HepG2 (cell line): ENCODE measurements at regions of chr12 and their contacts with region 1.

Region 1: DNA sequence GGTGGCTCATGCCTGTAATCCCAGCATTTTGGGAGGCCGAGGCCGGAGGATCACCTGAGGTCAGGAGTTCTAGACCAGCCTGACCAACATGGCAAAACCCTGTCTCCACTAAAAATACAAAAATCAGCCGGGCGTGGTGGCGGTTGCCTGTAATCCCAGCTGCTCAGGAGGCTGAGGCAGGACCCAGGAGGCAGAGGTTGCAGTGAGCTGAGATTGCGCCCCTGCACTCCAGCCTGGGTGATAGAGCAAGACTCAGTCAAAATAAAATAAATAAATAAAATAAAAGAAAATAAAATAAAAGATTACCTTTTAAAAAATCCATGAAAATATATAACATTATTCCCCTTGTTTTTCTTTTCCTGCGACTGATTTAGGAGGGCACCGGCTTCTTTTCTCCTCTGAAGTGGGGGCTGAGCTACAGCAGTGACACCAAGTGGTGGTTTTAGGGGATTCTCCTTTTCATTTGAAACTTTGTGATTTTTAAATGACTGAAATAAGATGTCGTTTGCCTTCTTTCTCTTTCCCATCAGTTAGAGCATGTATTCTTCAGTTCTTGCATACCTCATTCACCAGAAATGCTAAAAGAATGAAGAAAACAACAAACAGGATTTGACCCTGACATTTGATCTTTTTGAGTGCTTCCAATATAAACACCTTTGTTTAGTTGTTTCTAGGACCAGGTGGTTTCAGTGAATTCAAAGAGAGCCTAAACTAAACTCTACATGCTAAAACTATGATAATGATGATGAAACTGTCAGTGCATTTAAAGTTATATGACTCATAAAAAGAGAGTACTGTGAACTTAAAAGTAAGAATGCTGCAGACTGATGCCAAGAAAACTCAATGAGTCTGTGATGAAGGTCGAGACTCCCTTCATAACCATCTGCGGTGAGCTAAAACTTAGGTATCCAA is 22.6 kb upstream of the PKP2 start:
- DNase-seq: peak; percentile 37
- ATAC-seq: peak; percentile 69
- H3K4me3 ChIP-seq: no peak overlapping the region
- H3K27ac ChIP-seq: no peak overlapping the region
- H3K4me1 ChIP-seq: peaks cover 8% of the 10 kb centered on the region; the same call in 1 of the 2 replicates
- H3K27me3 ChIP-seq: no peaks in the 10 kb centered on the region
- CTCF ChIP-seq: peak; percentile 68
- EP300 ChIP-seq: no peak
- POLR2A ChIP-seq: no peak
- RAD21 ChIP-seq: peak; percentile 56; the same call in 1 of the 2 replicates

Region 2: DNA sequence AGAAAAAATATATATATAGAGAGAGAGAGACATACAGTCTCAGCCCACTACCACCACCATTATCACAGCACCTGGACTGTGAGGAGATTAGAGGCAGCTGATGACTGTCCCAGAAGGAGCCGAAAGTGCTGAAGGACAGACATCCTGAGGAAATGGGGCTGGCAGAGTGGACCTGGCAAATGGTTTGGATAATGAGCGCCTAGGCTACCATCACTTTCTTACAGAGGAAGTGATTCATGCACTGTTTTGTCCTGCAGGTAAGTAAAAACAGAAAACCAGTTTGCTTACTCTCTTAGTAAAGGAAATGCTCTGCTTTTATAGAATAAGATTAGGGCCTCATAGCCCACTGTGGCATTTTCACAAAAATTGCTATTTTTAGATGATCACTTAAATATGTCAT is 268.6 kb before region 1 on chr12:
- CTCF ChIA-PET with region 1: no interaction called
- POLR2A ChIA-PET with region 1: no interaction called
- in situ Hi-C with region 1: no loop called
- intact Hi-C with region 1: no loop called
- DNase-seq: no peak
- ATAC-seq: no peak
- H3K4me3 ChIP-seq: no peak overlapping the region
- H3K27ac ChIP-seq: no peak overlapping the region
- H3K4me1 ChIP-seq: peaks cover 29% of the 10 kb centered on the region
- H3K27me3 ChIP-seq: no peaks in the 10 kb centered on the region
- CTCF ChIP-seq: no peak
- EP300 ChIP-seq: no peak
- POLR2A ChIP-seq: no peak
- RAD21 ChIP-seq: no peak

Region 3: GRCh38 chr12:32854097-32854496 is 65.0 kb before region 1 on chr12:
- CTCF ChIA-PET with region 1: no interaction called
- POLR2A ChIA-PET with region 1: no interaction called
- in situ Hi-C with region 1: no loop called
- intact Hi-C with region 1: loop called (anchors 5 kb)
- DNase-seq: no peak
- ATAC-seq: no peak
- H3K4me3 ChIP-seq: no peak overlapping the region
- H3K27ac ChIP-seq: no peak overlapping the region
- H3K4me1 ChIP-seq: no peaks in the 10 kb centered on the region
- H3K27me3 ChIP-seq: no peaks in the 10 kb centered on the region
- CTCF ChIP-seq: no peak
- EP300 ChIP-seq: no peak
- POLR2A ChIP-seq: no peak
- RAD21 ChIP-seq: no peak

Region 4: DNA sequence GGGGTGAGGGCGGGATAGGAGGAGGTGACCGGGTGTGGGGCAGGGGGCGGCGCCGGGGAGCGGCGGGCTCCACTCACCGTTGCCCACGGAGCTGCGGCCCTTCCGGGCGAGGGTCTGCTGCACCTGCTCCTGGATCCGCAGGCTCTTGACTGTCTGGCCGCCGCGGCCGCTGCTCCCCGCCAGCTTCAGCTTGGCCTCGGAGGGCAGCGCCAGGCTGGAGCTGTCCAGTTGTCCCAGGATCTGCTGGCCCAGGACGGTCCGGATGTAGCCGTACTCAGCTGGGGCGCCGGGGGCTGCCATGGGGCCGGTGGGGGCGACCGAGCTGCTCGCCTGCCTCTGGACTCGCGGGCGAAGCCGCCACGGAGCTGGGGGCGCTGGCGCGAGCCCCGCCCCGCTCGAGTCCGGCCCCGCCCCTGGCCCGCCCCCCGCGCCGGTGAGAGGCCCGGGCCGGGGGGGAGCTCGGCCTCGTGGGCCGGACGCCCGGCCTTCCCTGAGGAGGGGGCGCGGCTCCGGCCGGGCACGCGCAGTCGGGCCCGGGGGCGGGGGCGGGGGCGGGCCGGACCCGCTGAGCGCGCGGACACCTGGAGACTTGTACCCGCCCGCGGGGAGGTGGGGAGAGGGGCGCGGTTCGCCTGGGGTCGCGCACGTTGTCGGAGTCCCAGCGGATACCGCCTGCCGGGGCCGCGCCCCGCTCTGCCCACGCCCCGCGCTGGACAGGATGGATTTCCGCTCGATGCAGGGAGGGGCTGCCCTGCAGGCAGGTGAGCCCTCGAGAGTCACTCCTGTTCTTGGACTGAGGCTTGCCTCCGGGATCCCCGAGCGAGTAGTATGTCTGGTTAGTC is 22.5 kb before region 1 on chr12 and contains the start of gene PKP2:
- CTCF ChIA-PET with region 1: no interaction called
- POLR2A ChIA-PET with region 1: interaction called, 3 read pairs
- in situ Hi-C with region 1: no loop called
- intact Hi-C with region 1: loop called (anchors 2 kb)
- DNase-seq: peak; percentile 80
- ATAC-seq: peak; percentile 82
- H3K4me3 ChIP-seq: peak within 1 kb of the TSS; percentile 78 to 98 (median 93)
- H3K27ac ChIP-seq: peak within 1 kb of the TSS; percentile 80
- H3K4me1 ChIP-seq: peaks cover 65% of the 10 kb centered on the region
- H3K27me3 ChIP-seq: no peaks in the 10 kb centered on the region
- CTCF ChIP-seq: no peak; the same call in 1 of the 2 replicates
- EP300 ChIP-seq: no peak
- POLR2A ChIP-seq: peak; percentile 53 to 71
- RAD21 ChIP-seq: peak; percentile 15; the same call in 1 of the 2 replicates
- total RNA-seq, gene PKP2: 25.3 and 27.5 TPM in 2 replicates

Region 5: GRCh38 chr12:32964981-32965585 is 45.9 kb after region 1 on chr12:
- CTCF ChIA-PET with region 1: no interaction called
- POLR2A ChIA-PET with region 1: no interaction called
- in situ Hi-C with region 1: no loop called
- intact Hi-C with region 1: no loop called
- DNase-seq: no peak
- ATAC-seq: no peak
- H3K4me3 ChIP-seq: no peak overlapping the region
- H3K27ac ChIP-seq: no peak overlapping the region
- H3K4me1 ChIP-seq: no peaks in the 10 kb centered on the region
- H3K27me3 ChIP-seq: no peaks in the 10 kb centered on the region
- CTCF ChIP-seq: no peak
- EP300 ChIP-seq: no peak
- POLR2A ChIP-seq: no peak
- RAD21 ChIP-seq: no peak